GM23248 (cell line): ENCODE measurements at regions of chr1 and their contacts with region 1.

Region 1: GRCh38 chr1:203273206-203273868 is 32.0 kb upstream of the BTG2 start:
- DNase-seq: peak; percentile 89
- H3K4me3 ChIP-seq: no peak overlapping the region
- H3K27ac ChIP-seq: no peak overlapping the region
- H3K4me1 ChIP-seq: peaks cover 4% of the 10 kb centered on the region; the same call in 1 of the 2 replicates
- H3K27me3 ChIP-seq: no peaks in the 10 kb centered on the region

Region 2: GRCh38 chr1:202264300-202264699 is 1009.0 kb before region 1 on chr1:
- in situ Hi-C with region 1: no loop called
- DNase-seq: peak; percentile 15
- H3K4me3 ChIP-seq: no peak overlapping the region
- H3K27ac ChIP-seq: no peak overlapping the region
- H3K4me1 ChIP-seq: no peaks in the 10 kb centered on the region
- H3K27me3 ChIP-seq: peaks cover 56% of the 10 kb centered on the region

Region 3: DNA sequence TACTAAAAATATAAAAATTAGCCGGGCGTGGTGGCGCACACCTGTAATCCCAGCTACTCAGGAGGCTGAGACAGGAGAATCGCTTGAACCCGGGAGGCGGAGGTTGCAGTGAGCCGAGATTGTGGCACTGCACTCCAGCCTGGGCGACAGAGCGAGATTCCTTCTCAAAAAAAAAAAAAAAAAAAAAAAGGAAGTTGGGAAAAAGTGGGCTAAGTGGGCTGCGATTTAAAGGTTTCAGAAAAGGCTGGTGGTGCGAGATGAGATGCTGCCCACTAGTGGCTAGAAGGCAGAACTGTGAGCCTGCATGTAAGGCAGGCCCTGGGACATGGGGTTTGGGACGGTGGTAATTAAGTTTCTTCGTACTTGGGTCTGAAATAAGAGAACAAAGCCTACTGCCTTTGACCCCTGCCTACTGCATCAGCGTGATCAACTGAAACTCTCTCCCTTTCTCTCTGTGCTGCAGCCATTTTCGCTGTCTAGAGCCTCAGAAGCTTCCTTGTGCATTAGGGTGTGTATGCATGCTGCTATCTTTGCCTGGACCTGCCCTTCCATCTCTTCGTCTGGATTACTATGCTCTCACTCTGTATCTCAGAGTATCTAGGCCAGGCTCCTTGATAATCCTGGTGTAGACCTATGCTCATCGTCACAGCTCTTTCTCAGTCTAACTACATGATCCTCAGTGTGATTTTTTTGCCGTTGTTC is 65.1 kb after region 1 on chr1:
- in situ Hi-C with region 1: loop called (anchors 5 kb)
- DNase-seq: peak; percentile 72
- H3K4me3 ChIP-seq: no peak overlapping the region
- H3K27ac ChIP-seq: no peak overlapping the region
- H3K4me1 ChIP-seq: no peaks in the 10 kb centered on the region
- H3K27me3 ChIP-seq: peaks cover 5% of the 10 kb centered on the region